Right ventricle myocardium inferior (tissue), 1 donor: ENCODE measurements at regions of chr5 and their contacts with region 1.

Region 1: DNA sequence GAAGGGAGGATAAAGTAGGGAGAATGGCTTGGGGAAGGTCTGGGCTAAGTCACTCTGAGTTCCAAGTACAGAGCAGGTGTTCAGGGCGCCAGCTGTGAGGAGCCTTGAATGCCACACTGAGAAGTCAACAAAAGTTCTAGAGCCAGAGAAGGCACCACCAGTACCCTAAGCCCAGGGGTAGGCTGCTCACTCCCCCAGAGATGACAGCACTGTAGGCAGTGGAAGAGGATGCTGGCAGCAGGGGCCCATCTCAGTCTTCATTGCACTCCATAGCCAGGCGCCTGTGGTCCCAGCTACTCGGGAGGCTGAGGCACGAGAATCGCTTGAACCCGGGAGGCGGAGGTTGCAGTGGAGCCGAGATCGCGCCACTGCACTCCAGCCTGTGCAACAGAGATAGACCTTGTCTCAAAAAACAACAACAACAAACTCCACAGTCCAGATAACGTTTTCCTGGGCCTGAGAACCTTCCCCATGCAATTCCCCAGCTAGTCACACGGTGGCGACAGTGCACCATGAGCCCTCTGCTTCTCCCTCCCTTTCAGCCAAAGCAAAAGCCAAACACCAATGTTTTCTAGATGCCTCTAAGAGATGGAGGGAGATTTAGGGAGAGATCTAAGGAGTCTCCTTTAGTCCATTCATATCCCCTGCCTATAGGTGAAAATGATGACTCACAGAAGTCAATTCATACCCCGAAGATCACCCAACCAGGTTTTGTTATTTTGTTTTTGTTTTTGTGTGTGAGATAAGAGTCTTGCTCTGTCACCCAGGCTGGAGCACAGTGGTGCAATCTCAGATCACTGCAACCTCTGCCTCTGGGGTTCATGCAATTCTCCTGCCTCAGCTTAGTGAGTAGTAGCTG is 19.8 kb upstream of the NSD1 start:
- DNase-seq: peak; percentile 86
- ATAC-seq: peak; percentile 52

Region 2: GRCh38 chr5:176660860-176661641 is 452.7 kb before region 1 on chr5:
- intact Hi-C with region 1: loop called (anchors 2 kb)
- DNase-seq: peak; percentile 86
- ATAC-seq: peak; percentile 78

Region 3: GRCh38 chr5:177071666-177072385 is 42.0 kb before region 1 on chr5:
- intact Hi-C with region 1: loop called (anchors 1 kb)
- DNase-seq: no peak
- ATAC-seq: peak; percentile 78

Region 4: DNA sequence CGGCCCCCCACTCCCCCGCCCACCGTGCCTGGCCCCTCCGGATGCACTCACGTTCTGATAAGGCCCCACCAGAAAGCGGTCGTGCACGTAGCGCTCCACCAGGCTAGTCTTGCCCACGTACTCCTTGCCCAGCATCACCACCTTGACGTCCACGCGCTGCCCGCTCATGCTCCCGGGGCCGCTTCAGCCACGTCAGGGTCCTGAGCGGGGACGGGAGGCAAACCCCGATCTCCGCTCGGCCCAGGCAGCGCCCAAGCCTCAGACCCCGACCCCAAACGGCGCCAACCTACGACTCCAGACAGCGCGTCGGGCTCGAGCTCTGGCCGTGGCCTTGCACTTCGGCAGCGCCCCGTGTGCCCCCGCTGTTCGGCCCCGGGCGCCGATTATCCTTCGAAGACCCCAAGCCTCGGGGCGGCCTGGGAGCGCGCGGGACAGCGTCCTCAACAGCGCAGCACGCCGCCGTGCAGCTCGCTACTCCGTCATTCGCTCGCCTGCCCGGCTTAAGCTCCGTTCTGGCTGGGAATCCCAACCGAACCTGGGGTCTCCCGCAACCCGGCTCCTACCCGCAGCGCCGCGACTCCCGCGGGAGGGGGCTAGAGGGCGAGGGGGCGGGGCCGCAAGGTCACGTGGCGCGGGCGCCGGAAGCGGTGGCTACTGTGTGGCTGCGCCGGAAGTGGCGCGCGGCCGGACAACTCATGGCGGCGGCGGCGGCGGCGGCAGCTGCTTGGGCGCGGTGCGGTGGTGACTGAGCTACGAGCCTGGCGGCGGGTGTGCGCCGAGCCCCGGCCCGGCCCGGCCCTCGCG is 189.5 kb after region 1 on chr5 and contains the starts of genes PRELID1 and RAB24:
- intact Hi-C with region 1: loop called (anchors 5 kb)
- DNase-seq: peak; percentile 96
- ATAC-seq: peak; percentile 84
- total RNA-seq, gene PRELID1: 34.1 TPM
- total RNA-seq, gene RAB24: 18.9 TPM

Region 5: DNA sequence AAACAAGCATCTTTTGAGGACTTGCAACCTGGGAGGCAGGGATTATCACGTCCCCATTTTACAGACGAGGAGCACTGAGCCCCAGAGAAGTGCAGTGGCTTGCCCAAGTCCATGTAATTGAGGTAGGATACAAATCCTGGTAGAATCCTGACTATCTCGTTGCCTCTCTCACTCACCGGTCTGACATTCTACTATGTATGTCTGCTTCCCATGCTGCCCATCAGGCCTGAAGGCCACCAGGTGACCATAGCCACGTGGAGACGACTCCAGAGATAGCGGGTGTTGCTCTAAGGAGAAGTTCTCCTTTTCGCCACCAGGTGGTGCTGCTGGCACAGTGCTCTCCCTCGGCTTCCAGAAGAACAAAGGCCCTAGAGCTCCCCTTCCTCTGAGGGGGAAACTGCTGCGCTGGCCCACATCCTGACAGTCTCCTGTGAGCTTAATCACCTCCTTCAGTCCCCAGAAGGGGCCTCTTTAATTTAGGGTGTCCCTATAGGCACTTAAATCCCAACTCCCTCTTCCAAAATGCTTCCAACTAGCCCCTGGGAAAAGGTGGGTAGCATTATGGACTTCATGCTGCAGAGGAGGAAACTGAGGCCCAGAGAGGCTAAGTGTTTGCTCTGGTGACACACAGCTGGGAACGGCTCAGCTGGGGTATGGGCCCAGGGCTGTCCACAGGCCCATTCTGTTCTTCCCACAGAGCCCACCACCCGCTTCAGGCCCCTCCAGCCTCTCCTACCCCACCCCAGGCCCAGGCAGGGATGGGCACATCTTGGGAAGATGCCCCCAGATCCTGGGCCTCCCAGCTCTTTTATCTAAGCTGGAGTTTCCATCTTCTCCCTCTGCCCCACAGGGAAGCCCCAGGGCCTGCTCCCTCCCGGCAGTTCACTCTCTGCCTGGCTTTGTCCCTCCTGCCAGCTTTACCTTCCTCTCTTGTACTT is 276.8 kb after region 1 on chr5:
- intact Hi-C with region 1: loop called (anchors 10 kb)
- DNase-seq: peak; percentile 79
- ATAC-seq: peak; percentile 83